ENCODE measurements at regions of chr6 and their contacts with region 1.

Region 1: DNA sequence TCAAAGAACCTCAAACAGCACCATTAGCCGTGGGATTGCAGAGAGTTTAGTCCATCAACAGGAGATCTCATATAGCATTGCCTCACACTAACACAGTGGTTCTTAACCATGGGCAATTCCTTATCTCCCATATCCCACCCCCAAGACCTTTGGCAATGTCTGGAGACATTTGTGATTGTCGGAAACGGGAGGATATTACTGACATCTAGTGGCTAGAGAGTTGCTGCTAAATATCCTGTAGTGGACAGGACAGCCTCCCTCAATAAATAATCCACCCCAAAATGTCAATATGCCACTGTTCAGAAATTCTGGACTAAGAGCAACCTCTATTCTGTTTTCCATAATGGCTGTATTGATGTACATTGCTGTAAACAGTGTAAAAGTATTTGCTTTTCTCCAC is 210.1 kb upstream of the CCN2 start:
- DNase-seq: peak; percentile 49
- H3K4me3 Mint-ChIP-seq: no peak overlapping the region
- H3K27ac Mint-ChIP-seq: no peak overlapping the region
- H3K4me1 Mint-ChIP-seq: peaks cover 29% of the 10 kb centered on the region
- H3K27me3 Mint-ChIP-seq: no peaks in the 10 kb centered on the region
- CTCF ChIP-seq: peak; percentile 43

Region 2: DNA sequence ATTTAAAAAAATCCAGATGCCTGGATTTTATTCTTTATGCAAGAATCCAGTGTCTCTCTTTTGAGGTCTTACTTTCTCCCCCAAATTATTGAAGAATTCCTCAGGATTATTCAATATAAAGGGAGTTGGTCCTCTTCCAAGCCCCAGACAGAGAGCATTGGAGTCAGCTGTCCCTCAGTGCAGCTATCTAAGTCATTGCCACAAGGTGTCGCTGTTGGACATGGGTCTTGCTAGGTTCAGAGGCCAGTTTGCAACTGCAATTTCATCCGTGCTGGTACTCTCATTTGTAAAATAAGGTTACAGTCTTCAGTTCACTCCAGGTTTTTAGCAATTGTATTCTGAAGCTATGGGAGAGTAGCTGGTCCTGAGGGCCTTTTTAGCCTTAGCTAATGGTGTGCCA is 237.9 kb before region 1 on chr6:
- CTCF ChIA-PET with region 1: interaction called, 3 read pairs
- intact Hi-C with region 1: loop called (anchors 1 kb)
- DNase-seq: peak; percentile 61
- H3K4me3 Mint-ChIP-seq: no peak overlapping the region
- H3K27ac Mint-ChIP-seq: no peak overlapping the region
- H3K4me1 Mint-ChIP-seq: no peaks in the 10 kb centered on the region
- H3K27me3 Mint-ChIP-seq: no peaks in the 10 kb centered on the region
- CTCF ChIP-seq: peak; percentile 62

Region 3: GRCh38 chr6:131949909-131950766 is 211.1 kb before region 1 on chr6:
- CTCF ChIA-PET with region 1: interaction called, 7 read pairs
- intact Hi-C with region 1: loop called (anchors 2 kb)
- DNase-seq: peak; percentile 80
- H3K4me3 Mint-ChIP-seq: peak overlapping the region; percentile 85
- H3K27ac Mint-ChIP-seq: peak overlapping the region; percentile 94
- H3K4me1 Mint-ChIP-seq: peaks cover 54% of the 10 kb centered on the region
- H3K27me3 Mint-ChIP-seq: no peaks in the 10 kb centered on the region
- CTCF ChIP-seq: no peak

Region 4: GRCh38 chr6:131958542-131959470 is 202.5 kb before region 1 on chr6:
- CTCF ChIA-PET with region 1: interaction called, 6 read pairs
- intact Hi-C with region 1: loop called (anchors 2 kb)
- DNase-seq: peak; percentile 37
- H3K4me3 Mint-ChIP-seq: no peak overlapping the region
- H3K27ac Mint-ChIP-seq: peak overlapping the region; percentile 45
- H3K4me1 Mint-ChIP-seq: peaks cover 37% of the 10 kb centered on the region
- H3K27me3 Mint-ChIP-seq: no peaks in the 10 kb centered on the region
- CTCF ChIP-seq: no peak

Region 5: DNA sequence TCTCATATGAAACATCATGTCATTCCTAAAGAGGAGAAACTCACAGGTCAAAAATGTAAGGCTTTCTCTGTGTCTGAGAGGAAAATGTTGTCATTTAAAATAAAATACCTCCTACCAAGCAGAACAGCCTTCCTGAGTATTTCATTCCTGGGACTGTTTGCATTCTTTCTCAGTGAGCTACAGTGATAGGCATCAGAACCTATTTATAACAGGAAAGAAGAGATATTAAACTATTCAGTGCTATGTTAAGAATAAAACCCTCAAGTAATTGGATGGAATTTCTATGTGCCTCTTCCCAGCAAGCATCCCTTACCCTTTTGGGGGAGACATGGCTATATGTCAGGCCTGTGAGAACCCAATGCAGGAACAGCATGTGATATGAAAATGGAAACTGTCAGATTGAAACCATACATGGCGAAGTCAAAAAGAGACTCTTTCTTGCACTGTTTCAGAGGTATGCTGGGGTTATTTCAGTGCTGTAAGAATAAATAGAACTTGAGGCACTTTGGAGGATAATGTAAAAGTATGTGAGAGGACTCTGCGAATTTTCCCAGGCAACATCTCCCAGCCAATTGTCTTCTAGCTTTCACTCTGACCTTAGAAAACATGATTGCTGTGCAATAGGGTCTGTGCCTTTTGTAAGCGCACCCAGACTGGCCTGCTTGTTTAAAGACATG is 76.3 kb before region 1 on chr6:
- CTCF ChIA-PET with region 1: no interaction called
- intact Hi-C with region 1: loop called (anchors 5 kb)
- DNase-seq: no peak
- H3K4me3 Mint-ChIP-seq: no peak overlapping the region
- H3K27ac Mint-ChIP-seq: peak overlapping the region; percentile 60
- H3K4me1 Mint-ChIP-seq: peaks cover 27% of the 10 kb centered on the region
- H3K27me3 Mint-ChIP-seq: no peaks in the 10 kb centered on the region
- CTCF ChIP-seq: no peak

Region 6: DNA sequence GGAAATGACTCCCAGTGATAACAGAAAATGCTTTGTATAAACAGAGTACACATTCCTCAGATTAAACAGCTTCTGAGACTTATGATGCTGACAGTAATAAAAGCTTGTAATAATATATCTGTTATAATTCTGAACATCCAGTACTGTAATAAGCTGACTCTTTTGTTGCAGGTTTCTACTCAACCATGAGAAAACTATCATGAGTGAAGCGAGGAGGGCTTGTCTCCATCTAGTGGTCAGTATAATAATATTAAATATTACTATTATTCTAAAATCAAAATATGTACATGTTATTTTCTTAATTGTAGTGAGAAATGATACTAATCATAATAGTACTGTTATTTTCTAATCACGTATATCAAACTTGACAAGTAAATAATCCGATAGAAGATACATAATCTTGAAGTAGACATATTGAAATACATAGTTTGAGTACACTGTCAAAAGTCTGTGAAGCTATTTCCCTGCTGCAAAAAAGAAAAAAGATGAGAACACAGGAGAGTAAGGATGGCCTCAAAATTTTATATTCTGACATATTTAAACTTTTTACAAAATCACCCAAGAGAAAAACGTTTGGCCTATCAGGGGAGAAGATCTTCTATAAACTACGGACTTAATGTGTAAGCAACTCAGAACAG is 56.9 kb after region 1 on chr6:
- CTCF ChIA-PET with region 1: no interaction called
- intact Hi-C with region 1: loop called (anchors 1 kb)
- DNase-seq: no peak
- H3K4me3 Mint-ChIP-seq: no peak overlapping the region
- H3K27ac Mint-ChIP-seq: no peak overlapping the region
- H3K4me1 Mint-ChIP-seq: peaks cover 8% of the 10 kb centered on the region
- H3K27me3 Mint-ChIP-seq: no peaks in the 10 kb centered on the region
- CTCF ChIP-seq: peak; percentile 35